ENCODE measurements at regions of chr1 and their contacts with region 1.

Region 1: DNA sequence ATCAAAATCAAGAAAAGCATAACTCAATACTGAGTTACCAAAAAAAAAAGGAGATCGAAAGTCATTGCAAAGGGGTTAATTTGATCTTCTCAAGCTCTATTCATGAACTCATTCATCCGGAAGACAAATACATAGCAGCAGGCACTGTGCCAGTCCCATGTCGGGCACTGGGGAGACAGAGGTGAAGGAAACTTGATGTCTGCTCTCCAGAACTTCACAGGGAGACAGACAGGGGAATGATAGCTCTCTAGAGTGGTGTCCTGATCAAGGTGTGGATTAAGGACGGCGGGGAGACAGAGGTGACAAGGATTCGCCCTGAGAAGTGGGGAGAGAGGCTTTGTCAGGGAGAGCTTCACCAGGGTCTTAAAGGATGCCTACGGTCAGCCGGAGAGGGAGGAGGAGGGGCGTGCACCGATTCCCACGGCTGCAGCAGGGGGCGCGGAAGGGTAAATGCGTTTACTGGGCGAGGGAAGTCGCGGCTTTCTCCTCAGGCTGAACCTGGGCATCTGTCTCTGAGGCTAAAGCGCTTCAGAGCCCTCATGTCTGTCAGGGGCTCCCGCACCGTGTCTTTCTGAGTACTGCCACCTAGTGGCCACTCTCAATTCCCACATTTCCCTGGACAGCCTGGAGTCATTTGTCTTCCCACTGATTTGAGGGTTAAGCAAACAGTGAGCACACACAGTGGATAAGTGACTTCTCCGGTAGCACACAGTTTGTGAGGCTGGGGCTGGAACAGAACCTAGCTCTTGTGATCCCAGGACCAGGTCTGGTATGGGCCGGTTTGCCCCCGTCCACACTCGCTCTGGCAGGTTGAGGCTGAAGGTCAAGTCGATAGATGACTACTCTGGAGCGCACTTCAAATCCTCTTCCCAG is 152.8 kb downstream of the TENT5C start:
- DNase-seq: peak; percentile 88
- H3K4me3 ChIP-seq: peak overlapping the region; percentile 74
- H3K27ac ChIP-seq: peak overlapping the region; percentile 59
- H3K4me1 ChIP-seq: peaks cover 21% of the 10 kb centered on the region
- H3K27me3 ChIP-seq: no peaks in the 10 kb centered on the region

Region 2: GRCh38 chr1:117523111-117523510 is 235.6 kb before region 1 on chr1:
- in situ Hi-C with region 1: loop called (anchors 5 kb)
- DNase-seq: no peak
- H3K4me3 ChIP-seq: no peak overlapping the region
- H3K27ac ChIP-seq: no peak overlapping the region
- H3K4me1 ChIP-seq: peaks cover 12% of the 10 kb centered on the region; the same call in 1 of the 2 replicates
- H3K27me3 ChIP-seq: no peaks in the 10 kb centered on the region

Region 3: GRCh38 chr1:117605159-117605773 is 153.4 kb before region 1 on chr1:
- in situ Hi-C with region 1: no loop called
- DNase-seq: peak; percentile 50
- H3K4me3 ChIP-seq: peak overlapping the region; percentile 81
- H3K27ac ChIP-seq: no peak overlapping the region
- H3K4me1 ChIP-seq: no peaks in the 10 kb centered on the region
- H3K27me3 ChIP-seq: 0 out of 2 replicates have a peak, but pooled peaks cover 10% of the 10 kb centered on the region

Region 4: DNA sequence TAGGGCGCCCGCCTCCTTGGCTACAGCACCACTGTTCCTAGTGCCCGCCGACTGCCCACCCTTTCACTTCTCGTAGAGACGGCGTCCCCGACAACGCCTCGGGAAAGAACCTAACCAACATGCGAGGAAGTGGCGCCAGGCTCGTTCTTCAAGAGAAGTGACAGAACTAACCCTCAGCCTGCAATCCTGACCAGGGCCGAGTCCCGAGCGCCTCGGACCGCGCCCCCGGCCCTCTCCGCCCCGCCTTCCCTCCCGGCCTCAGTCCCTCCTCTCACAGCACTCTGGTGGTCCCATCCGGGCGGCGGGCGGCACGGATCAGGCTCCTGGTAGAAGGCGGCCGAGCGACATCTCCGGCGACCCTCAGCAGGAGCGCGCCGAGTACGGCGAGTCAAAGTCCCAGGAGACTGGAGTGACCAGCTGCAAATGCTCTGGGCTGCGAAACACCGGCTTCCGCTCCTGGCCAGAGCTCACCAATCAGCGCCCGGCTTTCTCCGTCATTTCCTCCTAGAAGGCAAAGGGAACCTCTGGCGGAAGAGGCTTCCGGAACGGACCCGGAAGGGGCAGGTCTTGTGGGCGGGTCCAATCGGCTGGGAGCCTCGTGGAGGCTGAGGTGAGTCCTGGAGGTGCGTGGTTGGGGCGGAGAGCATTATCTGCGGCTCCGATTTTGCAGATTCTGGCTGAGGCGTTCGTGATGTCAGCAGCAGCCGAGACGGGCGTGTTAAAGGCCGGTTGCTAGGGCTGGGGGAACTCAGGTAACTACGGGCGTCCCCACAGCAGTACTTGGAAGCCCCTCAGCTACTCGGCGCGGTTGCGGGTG is 170.7 kb after region 1 on chr1 and contains the starts of genes GDAP2 and WDR3:
- in situ Hi-C with region 1: no loop called
- DNase-seq: peak; percentile 99
- H3K4me3 ChIP-seq: peak within 1 kb of the TSS; percentile 97
- H3K27ac ChIP-seq: peak within 1 kb of the TSS; percentile 59
- H3K4me1 ChIP-seq: peaks cover 32% of the 10 kb centered on the region
- H3K27me3 ChIP-seq: no peaks in the 10 kb centered on the region
- total RNA-seq, gene GDAP2: 17.9 and 22.6 TPM in 2 replicates
- total RNA-seq, gene WDR3: 20.5 and 32.2 TPM in 2 replicates

Measured in GM23248 (cell line).